ENCODE measurements at regions of chr15 and their contacts with region 1.

Region 1: DNA sequence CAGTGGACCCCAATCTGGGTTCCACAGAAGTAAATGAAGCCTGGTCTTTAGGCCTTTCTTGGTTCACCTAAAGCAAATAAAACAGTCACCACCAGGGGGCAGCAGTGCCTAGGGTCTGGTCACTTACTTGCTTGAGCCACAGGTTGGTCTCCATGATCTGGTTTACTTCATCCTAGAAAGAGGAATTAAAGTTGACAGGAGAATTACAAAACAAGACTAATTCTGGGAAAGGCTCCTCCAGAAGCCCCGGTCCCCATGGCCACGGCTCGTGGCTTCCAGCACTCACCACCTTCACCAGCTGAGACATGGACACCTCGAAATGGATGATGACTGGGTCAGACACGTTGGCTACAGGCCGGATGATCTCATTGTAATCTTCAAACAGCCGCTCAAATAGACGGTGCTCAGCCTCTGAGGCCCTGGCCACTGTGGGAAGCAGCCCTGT is 2.3 kb downstream of the CHRNA3 start:
- DNase-seq: peak; percentile 92
- H3K4me3 Mint-ChIP-seq: no peak overlapping the region
- H3K27ac Mint-ChIP-seq: no peak overlapping the region
- H3K4me1 Mint-ChIP-seq: peaks cover 12% of the 10 kb centered on the region
- H3K27me3 Mint-ChIP-seq: peaks cover 36% of the 10 kb centered on the region

Region 2: GRCh38 chr15:78709263-78709882 is 90.9 kb after region 1 on chr15:
- CTCF ChIA-PET with region 1: interaction called, 12 read pairs
- intact Hi-C with region 1: loop called (anchors 1 kb)
- DNase-seq: peak; percentile 79
- H3K4me3 Mint-ChIP-seq: no peak overlapping the region
- H3K27ac Mint-ChIP-seq: no peak overlapping the region
- H3K4me1 Mint-ChIP-seq: peaks cover 4% of the 10 kb centered on the region
- H3K27me3 Mint-ChIP-seq: peaks cover 31% of the 10 kb centered on the region